MCF 10A (cell line): ENCODE measurements at regions of chr2 and their contacts with region 1.

Region 1: DNA sequence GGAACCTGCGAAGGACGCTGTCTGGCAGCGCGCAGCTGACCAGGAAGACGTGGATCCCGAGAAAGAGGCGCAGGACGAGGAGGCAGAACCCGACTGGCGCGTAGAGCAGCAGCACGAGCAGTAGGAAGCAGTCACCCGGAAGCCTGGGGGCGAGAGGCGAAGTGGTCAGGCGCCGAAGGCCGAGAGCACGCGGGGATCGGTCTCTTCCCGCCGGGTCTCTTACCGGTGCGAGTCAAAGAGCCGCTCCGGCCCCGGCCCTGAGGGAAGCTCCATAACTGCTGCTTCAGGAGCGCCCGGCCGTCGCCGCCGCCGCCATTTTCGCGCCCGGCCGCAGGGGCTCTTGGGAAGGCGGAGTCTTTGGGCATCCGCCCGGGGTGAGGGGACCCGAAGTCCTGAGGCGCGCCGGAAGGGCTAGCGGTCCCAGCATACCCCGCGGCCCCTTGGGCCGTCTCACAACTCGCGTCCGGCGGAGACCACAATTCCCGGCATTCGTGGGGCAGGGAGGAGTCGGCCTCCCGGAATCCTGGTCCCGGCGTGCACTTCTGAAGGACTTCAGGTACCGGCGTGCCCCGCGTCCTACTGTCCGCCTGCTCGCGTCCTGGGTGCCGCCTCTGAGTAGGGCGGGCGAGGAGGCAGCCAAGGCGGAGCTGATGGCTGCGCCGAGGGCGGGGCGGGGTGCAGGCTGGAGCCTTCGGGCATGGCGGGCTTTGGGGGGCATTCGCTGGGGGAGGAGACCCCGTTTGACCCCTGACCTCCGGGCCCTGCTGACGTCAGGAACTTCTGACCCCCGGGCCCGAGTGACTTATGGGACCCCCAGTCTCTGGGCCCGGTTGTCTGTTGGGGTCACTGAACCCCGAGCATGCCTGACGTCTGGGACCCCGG is at the starts of genes AUP1 and HTRA2:
- DNase-seq: peak; percentile 99
- H3K4me3 Mint-ChIP-seq: peak within 1 kb of the TSS; percentile 94
- H3K27ac Mint-ChIP-seq: peak within 1 kb of the TSS; percentile 91
- H3K4me1 Mint-ChIP-seq: peaks cover 38% of the 10 kb centered on the region
- H3K27me3 Mint-ChIP-seq: no peaks in the 10 kb centered on the region
- CTCF ChIP-seq: no peak
- total RNA-seq, gene AUP1: 138 and 140 TPM in 2 replicates
- total RNA-seq, gene HTRA2: 27.6 and 33.0 TPM in 2 replicates

Region 2: DNA sequence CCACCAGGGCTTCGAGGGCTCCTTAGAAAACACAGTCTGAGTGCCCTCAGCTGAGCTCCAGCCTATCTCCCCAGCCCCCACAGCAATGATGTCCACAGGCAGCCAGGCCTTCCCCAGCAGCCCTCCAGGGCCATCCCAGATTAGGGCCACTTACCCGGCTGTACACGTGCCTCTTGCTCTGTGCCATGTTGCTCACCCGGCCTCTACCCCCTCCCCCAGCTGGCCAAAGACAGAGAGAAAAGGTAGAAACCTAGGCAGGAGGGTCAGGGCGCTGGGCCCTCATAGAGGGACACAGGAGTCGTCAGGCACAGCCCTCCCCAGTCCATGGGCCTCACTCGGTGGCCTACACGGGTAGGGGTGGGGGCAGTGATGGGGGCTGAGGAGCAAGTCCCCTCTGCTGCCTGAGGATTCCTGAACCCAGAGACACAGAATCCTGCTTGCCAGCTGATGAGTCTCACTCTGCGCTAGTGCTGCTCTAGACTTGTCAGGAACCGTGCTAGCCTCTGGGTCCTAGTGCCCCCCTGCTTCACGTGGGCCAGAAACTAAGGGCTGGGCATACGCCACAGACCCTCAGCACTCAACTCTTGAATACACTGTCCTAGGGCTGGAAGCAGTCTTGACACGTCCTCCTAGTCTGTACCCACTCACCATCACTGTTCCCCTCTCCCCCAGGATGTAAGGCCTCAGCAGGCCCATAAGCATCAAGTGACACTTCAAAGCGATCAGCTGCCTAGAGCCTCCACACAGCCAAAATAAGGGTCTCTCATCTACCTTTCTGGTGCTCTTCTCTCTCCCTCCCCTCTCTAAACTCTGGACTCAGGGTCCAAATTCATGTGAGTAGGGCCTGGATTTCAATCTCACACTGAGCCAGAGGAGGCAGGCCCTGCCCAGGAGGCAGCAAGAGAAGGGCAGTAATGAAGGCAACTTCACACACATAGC is 149.5 kb before region 1 on chr2 and contains the start of gene DCTN1:
- CTCF ChIA-PET with region 1: no interaction called
- POLR2A ChIA-PET with region 1: no interaction called
- intact Hi-C with region 1: no loop called
- DNase-seq: peak; percentile 52
- H3K4me3 Mint-ChIP-seq: peak within 1 kb of the TSS; percentile 43
- H3K27ac Mint-ChIP-seq: no peak within 1 kb of the TSS
- H3K4me1 Mint-ChIP-seq: peaks cover 34% of the 10 kb centered on the region
- H3K27me3 Mint-ChIP-seq: no peaks in the 10 kb centered on the region
- CTCF ChIP-seq: no peak
- total RNA-seq, gene DCTN1: 113 and 117 TPM in 2 replicates

Region 3: GRCh38 chr2:74507145-74507925 is 22.3 kb before region 1 on chr2 and contains the start of gene PCGF1:
- CTCF ChIA-PET with region 1: interaction called, 5 read pairs
- POLR2A ChIA-PET with region 1: interaction called, 135 read pairs
- intact Hi-C with region 1: loop called (anchors 1 kb)
- DNase-seq: peak; percentile 98
- H3K4me3 Mint-ChIP-seq: peak within 1 kb of the TSS; percentile 88
- H3K27ac Mint-ChIP-seq: peak within 1 kb of the TSS; percentile 98
- H3K4me1 Mint-ChIP-seq: peaks cover 28% of the 10 kb centered on the region
- H3K27me3 Mint-ChIP-seq: no peaks in the 10 kb centered on the region
- CTCF ChIP-seq: no peak
- total RNA-seq, gene PCGF1: 37.5 and 41.6 TPM in 2 replicates

Region 4: GRCh38 chr2:74566754-74567085 is 37.1 kb after region 1 on chr2:
- CTCF ChIA-PET with region 1: interaction called, 4 read pairs
- POLR2A ChIA-PET with region 1: interaction called, 21 read pairs
- intact Hi-C with region 1: no loop called
- DNase-seq: peak; percentile 54
- H3K4me3 Mint-ChIP-seq: no peak overlapping the region
- H3K27ac Mint-ChIP-seq: peak overlapping the region; percentile 89
- H3K4me1 Mint-ChIP-seq: peaks cover 48% of the 10 kb centered on the region
- H3K27me3 Mint-ChIP-seq: no peaks in the 10 kb centered on the region
- CTCF ChIP-seq: no peak

Region 5: DNA sequence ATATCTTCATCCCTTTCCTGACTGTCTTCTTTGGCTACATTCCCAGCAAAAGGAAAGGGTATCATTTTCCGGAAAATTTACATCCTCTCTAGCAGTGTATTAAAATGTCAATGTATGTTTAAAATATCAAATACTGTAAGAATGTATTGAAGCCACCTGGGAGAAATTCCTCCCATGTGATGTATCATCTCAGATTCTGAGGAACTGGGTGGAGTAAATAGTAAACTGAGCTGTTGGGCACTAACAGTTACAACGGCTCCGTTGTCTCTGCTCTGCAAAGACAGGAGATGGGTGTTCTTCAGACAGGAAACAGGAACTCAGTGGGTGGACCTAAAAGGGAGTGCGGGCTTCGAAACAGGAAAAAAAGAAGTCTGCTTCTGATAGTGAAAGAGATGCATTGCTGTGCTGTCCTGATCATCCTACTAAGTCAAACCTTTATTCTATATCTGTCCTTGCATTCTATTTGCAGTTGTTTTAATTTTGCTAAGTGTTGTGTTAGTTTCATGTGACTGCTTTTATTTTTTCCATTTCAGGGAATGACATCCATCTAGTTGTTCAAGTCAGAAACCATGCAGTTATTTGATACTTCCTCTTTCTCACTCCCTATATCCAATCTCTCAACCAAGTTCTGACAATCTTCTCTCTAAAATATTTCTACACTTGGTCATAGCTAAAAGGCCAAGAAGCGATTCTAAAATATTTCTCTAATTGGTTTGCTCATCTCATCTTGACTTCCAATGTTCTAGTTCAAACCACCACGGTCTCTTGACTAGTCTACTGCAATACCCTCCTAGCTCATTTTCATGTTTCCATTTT is 44.4 kb after region 1 on chr2:
- CTCF ChIA-PET with region 1: interaction called, 16 read pairs
- POLR2A ChIA-PET with region 1: interaction called, 8 read pairs
- intact Hi-C with region 1: no loop called
- DNase-seq: peak; percentile 71
- H3K4me3 Mint-ChIP-seq: peak overlapping the region; percentile 48
- H3K27ac Mint-ChIP-seq: peak overlapping the region; percentile 71
- H3K4me1 Mint-ChIP-seq: peaks cover 18% of the 10 kb centered on the region
- H3K27me3 Mint-ChIP-seq: no peaks in the 10 kb centered on the region
- CTCF ChIP-seq: no peak